ENCODE measurements at regions of chr1 and their contacts with region 1.

Region 1: GRCh38 chr1:246931549-246932365 is at the start of gene AHCTF1:
- DNase-seq: peak; percentile 93
- H3K4me3 Mint-ChIP-seq: peak within 1 kb of the TSS; percentile 93
- H3K27ac Mint-ChIP-seq: peak within 1 kb of the TSS; percentile 97
- H3K4me1 Mint-ChIP-seq: peaks cover 24% of the 10 kb centered on the region
- H3K27me3 Mint-ChIP-seq: peaks cover 6% of the 10 kb centered on the region
- total RNA-seq, gene AHCTF1: 56.1 and 60.5 TPM in 2 replicates

Region 2: DNA sequence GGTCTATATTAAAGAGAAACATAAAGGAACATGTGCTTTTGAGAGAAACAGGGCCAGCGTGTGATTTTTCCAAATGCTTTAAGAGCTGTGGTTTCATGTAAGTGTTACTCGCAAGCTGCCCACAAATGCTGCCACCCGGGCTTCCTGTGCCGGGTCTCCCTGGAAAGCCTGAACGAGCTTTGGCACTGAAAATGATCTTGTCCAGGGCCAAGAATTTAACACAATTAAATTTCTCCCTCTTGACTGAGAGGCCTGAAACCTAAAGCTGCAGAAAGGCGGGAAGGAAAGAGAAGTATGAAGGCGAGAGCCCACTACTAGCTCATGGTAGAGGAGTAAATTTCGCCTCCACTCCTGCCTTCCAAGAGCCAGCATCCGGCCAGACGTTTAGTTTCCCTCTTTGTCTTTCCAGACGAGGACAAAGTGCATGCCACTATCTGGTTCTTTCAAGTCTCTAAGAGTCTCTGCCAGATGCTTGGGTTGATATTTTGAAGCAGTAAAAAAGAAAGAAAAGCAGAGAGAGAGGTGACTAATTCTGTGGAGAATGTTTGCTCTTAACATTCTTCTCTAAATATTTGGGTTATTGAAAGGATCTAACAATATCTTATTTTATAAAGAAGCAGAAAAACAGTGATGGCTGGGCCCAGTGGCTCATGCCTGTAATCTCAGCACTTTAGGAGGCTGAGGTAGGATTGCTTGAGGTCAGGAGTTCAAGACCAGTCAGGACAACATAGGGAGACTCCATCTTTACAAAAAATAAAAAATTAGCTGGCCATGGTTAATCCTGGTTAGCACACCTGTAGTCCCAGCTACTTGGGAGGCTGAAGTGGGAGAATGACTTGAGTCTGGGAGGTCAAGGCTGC is 1967.4 kb before region 1 on chr1:
- intact Hi-C with region 1: loop called (anchors 5 kb)
- DNase-seq: no peak
- H3K4me3 Mint-ChIP-seq: no peak overlapping the region
- H3K27ac Mint-ChIP-seq: no peak overlapping the region
- H3K4me1 Mint-ChIP-seq: peaks cover 21% of the 10 kb centered on the region
- H3K27me3 Mint-ChIP-seq: peaks cover 1% of the 10 kb centered on the region

Region 3: GRCh38 chr1:246658567-246658966 is 273.2 kb before region 1 on chr1:
- intact Hi-C with region 1: no loop called
- DNase-seq: no peak
- H3K4me3 Mint-ChIP-seq: no peak overlapping the region
- H3K27ac Mint-ChIP-seq: no peak overlapping the region
- H3K4me1 Mint-ChIP-seq: no peaks in the 10 kb centered on the region
- H3K27me3 Mint-ChIP-seq: no peaks in the 10 kb centered on the region

Region 4: DNA sequence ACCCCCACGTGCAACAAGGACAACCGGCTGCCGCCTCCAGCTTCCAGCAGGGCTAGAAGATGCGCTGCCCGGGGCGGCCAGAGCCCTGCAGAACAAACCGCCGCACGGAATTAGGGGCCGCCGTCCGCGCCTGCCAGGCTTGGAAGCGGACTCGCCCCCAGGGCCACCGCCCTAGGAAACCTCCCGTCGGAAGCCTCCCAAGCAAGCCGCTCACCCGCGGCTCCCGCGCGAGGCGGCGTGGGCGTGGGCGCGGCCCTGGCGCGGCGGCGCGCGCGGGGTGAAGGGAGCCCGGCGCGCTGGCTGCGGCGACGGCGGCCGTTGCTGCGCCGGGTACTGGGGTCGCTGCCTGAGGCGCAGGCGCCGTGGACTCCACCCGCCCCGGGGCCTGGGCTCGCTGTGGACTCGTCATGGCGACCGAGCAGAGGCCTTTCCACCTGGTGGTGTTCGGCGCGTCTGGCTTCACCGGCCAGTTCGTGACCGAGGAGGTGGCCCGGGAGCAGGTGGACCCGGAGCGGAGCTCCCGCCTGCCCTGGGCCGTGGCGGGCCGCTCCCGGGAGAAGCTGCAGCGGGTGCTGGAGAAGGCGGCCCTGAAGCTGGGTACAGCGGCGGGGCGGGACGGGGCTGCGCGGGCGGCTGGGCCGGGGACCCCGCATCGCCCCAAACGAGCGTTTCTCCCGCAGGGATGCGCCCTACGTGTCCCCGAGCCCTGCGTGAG is 207.6 kb before region 1 on chr1 and contains the start of gene SCCPDH:
- intact Hi-C with region 1: loop called (anchors 2 kb)
- DNase-seq: peak; percentile 55
- H3K4me3 Mint-ChIP-seq: peak within 1 kb of the TSS; percentile 92
- H3K27ac Mint-ChIP-seq: peak within 1 kb of the TSS; percentile 78
- H3K4me1 Mint-ChIP-seq: peaks cover 10% of the 10 kb centered on the region
- H3K27me3 Mint-ChIP-seq: peaks cover 6% of the 10 kb centered on the region
- total RNA-seq, gene SCCPDH: 23.5 and 24.3 TPM in 2 replicates

Region 5: GRCh38 chr1:246734866-246735265 is 196.9 kb before region 1 on chr1:
- intact Hi-C with region 1: no loop called
- DNase-seq: no peak
- H3K4me3 Mint-ChIP-seq: no peak overlapping the region
- H3K27ac Mint-ChIP-seq: no peak overlapping the region
- H3K4me1 Mint-ChIP-seq: peaks cover 7% of the 10 kb centered on the region
- H3K27me3 Mint-ChIP-seq: no peaks in the 10 kb centered on the region

Region 6: GRCh38 chr1:246865921-246866320 is 65.8 kb before region 1 on chr1:
- intact Hi-C with region 1: no loop called
- DNase-seq: no peak
- H3K4me3 Mint-ChIP-seq: no peak overlapping the region
- H3K27ac Mint-ChIP-seq: no peak overlapping the region
- H3K4me1 Mint-ChIP-seq: no peaks in the 10 kb centered on the region
- H3K27me3 Mint-ChIP-seq: no peaks in the 10 kb centered on the region

Region 7: GRCh38 chr1:246907472-246907871 is 24.3 kb before region 1 on chr1:
- intact Hi-C with region 1: loop called (anchors 2 kb)
- DNase-seq: no peak
- H3K4me3 Mint-ChIP-seq: no peak overlapping the region
- H3K27ac Mint-ChIP-seq: no peak overlapping the region
- H3K4me1 Mint-ChIP-seq: peaks cover 18% of the 10 kb centered on the region
- H3K27me3 Mint-ChIP-seq: no peaks in the 10 kb centered on the region

Region 8: GRCh38 chr1:247103859-247104591 is 172.3 kb after region 1 on chr1 and contains the start of gene ZNF669:
- intact Hi-C with region 1: loop called (anchors 1 kb)
- DNase-seq: peak; percentile 86
- H3K4me3 Mint-ChIP-seq: peak within 1 kb of the TSS; percentile 91
- H3K27ac Mint-ChIP-seq: peak within 1 kb of the TSS; percentile 74
- H3K4me1 Mint-ChIP-seq: peaks cover 15% of the 10 kb centered on the region
- H3K27me3 Mint-ChIP-seq: peaks cover 14% of the 10 kb centered on the region
- total RNA-seq, gene ZNF669: 8.0 and 9.5 TPM in 2 replicates

Region 9: DNA sequence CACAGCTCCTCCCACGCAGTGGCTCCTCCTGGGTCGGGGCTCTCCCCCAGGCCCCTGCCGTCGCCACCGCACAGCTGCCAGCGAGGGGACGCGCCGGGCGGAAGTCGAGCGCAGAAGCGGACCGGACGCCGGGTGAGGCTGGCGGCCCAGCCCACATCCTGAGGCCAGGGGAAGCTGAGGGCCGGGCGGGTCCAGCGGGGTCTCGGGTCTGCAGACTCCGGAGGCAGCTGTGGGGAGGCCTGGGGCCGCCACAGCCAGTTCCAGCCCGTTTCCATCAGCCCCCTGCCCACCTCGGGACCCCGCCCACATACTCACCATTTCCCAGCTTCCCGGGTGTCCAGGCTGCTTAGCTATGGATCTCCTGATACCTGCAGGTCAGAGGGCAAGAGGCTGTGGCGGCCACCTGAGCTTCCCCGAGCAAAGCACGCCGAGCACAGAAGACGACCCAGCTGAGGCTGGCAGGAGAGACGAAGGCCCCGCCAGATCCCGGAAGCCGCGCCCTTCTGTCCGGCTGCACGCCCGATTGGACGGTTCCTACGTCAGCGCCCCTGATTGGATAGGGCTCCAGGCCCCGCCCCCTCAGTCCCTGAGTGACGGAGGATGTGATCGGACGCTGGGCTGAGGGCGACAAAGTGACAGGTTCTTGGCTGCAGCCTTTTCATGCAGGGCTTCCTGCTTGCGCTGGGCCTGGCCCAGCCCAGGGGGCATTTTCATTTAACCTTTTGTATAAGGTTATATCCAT is 278.8 kb after region 1 on chr1:
- intact Hi-C with region 1: loop called (anchors 1 kb)
- DNase-seq: peak; percentile 93
- H3K4me3 Mint-ChIP-seq: peak overlapping the region; percentile 94
- H3K27ac Mint-ChIP-seq: peak overlapping the region; percentile 94
- H3K4me1 Mint-ChIP-seq: peaks cover 29% of the 10 kb centered on the region
- H3K27me3 Mint-ChIP-seq: no peaks in the 10 kb centered on the region

Region 10: DNA sequence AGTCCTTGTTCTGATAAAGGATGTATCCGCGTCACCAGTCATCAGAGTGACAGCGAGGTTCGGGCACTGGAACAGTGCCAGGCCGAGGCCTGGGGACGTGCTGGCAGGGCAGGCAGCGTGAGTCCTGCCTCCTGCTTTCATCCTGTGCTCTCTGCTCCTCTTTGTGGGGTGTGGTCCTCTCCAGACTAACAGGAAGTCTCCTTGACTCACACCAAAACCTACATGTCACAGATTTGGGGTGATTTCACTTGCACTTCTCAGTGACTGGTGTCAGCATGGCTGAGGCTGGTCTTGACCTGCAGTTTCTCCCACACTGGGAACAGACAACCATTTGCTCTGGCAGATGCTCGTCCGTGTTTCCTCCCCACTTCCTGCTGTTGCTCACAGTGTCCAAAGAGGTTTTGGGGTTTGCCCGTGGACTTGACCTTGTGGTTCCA is 475.4 kb after region 1 on chr1:
- intact Hi-C with region 1: loop called (anchors 5 kb)
- DNase-seq: peak; percentile 35
- H3K4me3 Mint-ChIP-seq: peak overlapping the region; percentile 40
- H3K27ac Mint-ChIP-seq: peak overlapping the region; percentile 27
- H3K4me1 Mint-ChIP-seq: peaks cover 34% of the 10 kb centered on the region
- H3K27me3 Mint-ChIP-seq: peaks cover 32% of the 10 kb centered on the region